ENCODE measurements at regions of chr19 and their contacts with region 1.

Region 1: GRCh38 chr19:48445606-48446481 is at the start of gene GRWD1:
- DNase-seq: peak; percentile 93
- ATAC-seq: peak; percentile 91
- total RNA-seq, gene GRWD1: 17.7 TPM

Region 2: DNA sequence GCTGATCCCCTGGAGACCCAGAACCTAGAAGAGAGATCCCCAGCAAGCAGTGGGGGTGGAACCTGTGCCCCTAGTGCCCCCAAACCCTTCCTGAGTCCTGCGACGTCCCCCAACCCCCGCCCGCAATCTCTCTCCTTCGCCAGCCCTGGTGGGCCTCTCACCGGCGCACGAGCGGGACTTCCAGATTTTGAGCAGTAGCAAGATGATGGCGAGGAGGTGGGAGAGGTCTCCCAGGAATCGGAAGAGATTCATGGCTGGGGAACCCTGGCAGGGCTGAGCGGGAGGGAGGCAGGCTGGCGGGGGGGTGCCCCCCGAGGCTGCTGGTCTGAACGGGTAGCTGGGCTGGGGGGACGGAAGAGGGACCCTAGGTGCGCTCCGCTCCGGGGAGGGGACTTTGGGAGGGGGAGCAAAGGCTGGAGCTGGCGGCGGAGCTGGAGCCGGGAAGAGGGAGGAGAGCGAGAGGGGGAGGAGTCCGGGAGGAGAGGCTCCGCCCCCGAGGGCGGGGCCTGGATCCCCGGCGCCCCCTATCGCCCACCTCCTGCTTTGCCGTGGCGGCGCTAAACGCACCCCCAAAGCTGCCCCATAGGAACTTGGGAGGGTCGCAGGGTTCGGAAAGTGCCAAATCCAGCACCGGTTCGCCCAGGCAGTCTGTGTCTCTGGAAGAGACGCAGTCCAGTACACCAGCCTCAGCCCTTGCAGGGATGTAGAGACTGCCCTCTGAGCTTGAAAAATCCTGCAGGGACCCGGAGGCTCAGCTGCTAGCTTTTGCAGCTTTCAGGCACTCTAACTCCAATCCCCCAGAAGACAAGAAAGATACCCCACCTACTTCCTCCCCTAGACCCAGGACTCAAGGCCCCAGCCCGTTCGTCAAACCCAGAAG is 54.5 kb before region 1 on chr19 and contains the start of gene KDELR1:
- intact Hi-C with region 1: loop called (anchors 1 kb)
- DNase-seq: peak; percentile 85
- ATAC-seq: peak; percentile 95
- total RNA-seq, gene KDELR1: 73.5 TPM

Region 3: GRCh38 chr19:48461982-48462655 is 16.3 kb after region 1 on chr19:
- intact Hi-C with region 1: no loop called
- DNase-seq: peak; percentile 50
- ATAC-seq: no peak